ENCODE measurements at regions of chr3 and their contacts with region 1.

Region 1: DNA sequence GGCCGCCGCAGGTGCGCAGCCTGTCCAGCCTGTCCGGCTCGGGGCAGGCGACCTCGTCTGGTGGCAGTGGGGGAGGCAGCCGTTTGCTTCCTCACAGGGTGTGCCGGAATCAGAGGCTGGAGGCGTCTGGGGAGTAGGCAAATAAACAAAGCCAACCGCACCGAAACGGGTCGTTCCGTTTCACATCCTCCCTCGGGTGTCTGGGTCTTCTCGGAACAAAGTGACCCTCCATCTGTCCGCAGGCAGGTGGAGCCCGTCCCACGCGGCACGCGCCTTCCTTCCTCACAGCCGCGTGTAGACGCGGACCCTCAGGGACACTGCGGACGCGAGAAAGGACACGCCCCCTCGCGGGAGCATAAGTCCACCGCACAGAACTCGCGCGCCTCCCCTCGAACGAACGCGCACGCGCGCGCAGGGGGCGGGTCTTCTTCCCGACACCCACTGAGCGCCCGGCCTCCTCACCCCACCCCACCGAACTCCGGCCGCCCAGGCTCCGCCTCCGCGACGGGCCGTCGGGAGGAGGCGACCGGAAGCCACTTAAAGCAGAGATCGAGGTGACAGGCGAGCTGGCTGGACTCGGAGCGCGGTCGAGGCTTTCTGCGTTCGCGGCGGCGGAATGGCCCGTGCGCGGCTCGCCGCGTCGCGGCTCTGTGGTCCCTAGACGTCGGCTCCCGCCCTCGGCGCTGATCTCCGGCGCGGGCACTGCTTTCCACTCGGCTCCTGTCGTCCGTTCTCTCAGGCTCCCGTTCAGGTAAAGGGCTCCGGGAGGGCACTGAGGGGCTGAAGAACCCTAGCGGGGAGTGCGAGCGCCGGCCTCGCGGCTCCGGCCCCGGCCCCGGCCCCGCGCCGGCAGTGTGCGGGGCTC is at the start of gene TIPARP:
- DNase-seq: peak; percentile 100
- ATAC-seq: peak; percentile 96
- H3K4me3 ChIP-seq: peak within 1 kb of the TSS; percentile 88
- H3K27ac ChIP-seq: peak within 1 kb of the TSS; percentile 96
- H3K4me1 ChIP-seq: peaks cover 38% of the 10 kb centered on the region
- H3K27me3 ChIP-seq: no peaks in the 10 kb centered on the region
- CTCF ChIP-seq: peak; percentile 71
- total RNA-seq, gene TIPARP: 56.9 TPM

Region 2: DNA sequence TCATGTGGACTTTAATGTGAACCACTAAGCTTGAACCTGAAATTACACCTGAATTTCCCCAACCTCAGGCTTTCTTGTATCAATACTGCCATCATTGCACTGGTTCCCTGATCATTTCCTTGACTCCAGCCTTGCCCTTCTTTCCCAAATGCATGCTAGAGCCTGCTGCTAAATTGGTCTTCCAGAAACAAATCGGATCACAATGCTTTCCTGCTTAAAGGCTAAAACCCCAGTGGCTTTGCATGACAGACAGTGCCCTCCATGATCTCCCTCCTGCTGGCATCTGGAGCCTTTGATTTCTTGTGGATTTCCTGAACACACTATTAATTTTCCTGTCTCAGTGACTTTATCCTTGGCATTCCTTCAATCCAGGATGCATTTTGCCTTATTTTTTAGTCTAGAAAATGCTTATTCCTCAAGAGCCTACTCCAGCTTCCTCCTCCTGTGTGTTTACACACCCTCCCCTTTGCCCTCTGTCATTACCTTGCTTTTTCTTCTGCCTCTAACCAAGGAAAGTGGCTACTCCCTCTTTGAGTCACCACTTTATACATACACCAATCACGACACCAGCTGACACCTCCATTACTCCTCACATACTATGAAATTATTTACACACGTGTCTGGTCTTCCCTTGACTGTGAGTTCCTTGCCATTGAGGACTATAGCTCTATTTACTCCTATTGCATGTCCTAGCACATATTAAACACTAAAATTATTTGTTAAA is 339.3 kb before region 1 on chr3:
- intact Hi-C with region 1: no loop called
- DNase-seq: no peak
- ATAC-seq: no peak
- H3K4me3 ChIP-seq: no peak overlapping the region
- H3K27ac ChIP-seq: no peak overlapping the region
- H3K4me1 ChIP-seq: no peaks in the 10 kb centered on the region
- H3K27me3 ChIP-seq: no peaks in the 10 kb centered on the region
- CTCF ChIP-seq: no peak

Region 3: DNA sequence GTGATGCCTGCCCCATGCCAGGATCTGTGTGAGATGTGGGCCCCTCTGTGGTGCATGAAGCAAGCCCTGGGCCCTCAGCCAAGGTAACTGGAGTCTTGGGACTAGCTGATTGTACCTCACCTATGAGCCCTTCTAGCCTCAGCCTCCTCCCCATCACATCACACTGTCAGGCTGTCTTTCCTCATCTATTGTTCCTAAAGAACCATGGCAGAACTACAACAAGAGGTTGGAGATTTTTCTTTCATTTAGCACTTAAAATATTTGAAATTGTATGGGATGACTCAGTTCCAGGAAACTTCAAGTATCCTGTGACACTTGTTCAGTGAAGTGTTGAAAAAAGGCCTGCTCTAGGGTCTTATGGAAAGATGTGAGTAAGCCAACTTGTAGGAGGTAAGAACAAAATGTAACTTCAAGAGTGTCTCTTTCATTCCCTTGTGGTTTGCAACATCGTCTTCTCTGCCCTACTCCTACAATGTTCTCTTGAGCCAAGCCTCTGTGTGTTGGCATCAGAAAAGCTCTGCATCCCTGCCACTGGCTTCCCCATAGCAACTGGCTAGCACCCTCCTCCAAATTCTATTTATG is 58.6 kb before region 1 on chr3:
- intact Hi-C with region 1: no loop called
- DNase-seq: peak; percentile 74
- ATAC-seq: peak; percentile 93
- H3K4me3 ChIP-seq: no peak overlapping the region
- H3K27ac ChIP-seq: peak overlapping the region; percentile 71
- H3K4me1 ChIP-seq: no peaks in the 10 kb centered on the region
- H3K27me3 ChIP-seq: no peaks in the 10 kb centered on the region
- CTCF ChIP-seq: no peak

Region 4: DNA sequence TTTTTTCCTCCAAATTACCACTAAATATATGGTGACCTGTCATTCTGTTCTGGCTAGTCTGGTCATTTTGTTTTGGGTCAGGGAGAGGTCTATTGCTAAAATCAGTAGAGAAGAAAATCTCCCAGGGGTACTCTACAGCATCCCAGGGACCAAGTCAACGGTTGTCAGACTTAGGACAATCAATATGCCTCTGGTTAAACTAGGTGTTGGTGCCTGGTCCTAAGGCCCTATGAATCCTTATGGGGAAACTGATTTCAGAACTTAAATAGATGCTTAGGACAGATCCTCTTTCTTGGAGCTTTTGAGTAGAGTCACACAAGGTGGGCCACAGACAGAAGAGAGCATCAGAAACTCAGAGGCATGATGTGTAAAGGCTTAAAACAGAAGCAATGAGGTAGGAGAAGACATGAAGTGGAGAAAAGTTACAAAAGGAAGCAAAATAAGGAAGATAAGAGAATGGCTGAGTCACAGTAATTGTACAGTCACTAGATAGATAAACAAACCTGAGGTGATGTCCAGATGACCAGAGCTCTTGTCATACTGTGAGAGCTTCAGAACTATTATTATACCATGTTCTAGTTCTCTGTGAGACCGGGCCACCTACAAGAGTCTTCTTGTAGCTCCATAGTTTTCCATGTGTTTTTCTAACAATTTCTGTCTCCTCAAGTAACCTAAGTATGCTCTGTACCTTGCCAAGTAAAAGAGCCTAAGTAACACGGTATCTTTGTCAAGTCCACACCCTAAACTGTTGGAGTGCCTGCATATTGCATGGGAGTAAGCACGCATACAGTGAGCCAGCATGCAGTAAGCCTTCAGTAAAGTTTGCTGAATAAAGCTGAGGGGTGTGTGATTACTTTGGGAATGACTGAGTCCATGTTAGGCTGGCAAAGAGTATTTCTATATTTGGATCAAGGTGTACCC is 107.3 kb after region 1 on chr3:
- intact Hi-C with region 1: no loop called
- DNase-seq: no peak
- ATAC-seq: peak; percentile 68
- H3K4me3 ChIP-seq: no peak overlapping the region
- H3K27ac ChIP-seq: no peak overlapping the region
- H3K4me1 ChIP-seq: no peaks in the 10 kb centered on the region
- H3K27me3 ChIP-seq: no peaks in the 10 kb centered on the region
- CTCF ChIP-seq: no peak

Region 5: DNA sequence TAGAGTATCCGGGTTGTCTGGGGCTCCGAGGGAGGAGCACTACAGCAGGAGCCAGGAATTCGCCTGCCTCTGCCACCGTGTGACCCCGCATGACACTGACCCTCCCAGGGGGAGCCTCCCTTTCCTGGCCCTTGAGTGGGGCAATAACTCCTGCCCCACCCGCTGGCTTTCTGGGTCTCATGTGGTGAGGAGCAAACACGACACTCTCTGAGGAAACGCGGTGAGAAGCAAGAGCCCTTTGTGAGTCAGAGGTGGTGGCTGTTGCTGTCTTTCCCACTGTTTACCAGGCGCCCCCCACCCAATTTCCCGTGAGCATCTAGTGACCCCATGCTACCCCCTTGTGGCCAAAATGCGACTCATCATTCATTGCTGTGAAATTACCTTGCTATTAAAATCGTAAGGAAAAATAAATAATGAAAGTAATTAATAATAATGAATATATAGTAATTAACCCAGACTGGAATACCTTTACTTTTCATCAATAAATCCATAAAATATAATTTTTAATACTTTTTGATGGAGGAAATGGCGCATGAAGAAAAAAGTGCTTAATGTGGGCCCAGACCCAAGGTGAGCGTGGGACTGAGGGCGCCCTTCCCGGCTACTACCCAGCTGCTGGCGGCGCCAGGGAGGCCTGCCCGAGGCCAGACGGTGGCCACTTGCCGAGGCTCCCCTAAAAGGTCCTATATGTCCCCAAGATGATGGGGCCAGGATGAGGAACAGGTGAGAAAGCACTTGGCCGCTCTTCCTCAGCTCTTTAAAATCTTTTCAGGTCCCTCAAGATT is 456.4 kb after region 1 on chr3:
- intact Hi-C with region 1: loop called (anchors 10 kb)
- DNase-seq: peak; percentile 84
- ATAC-seq: peak; percentile 72
- H3K4me3 ChIP-seq: no peak overlapping the region
- H3K27ac ChIP-seq: peak overlapping the region; percentile 82
- H3K4me1 ChIP-seq: peaks cover 49% of the 10 kb centered on the region
- H3K27me3 ChIP-seq: no peaks in the 10 kb centered on the region
- CTCF ChIP-seq: peak; percentile 65

Measured in upper lobe of right lung (tissue), 1 donor.